H1 (cell line): ENCODE measurements at regions of chr6 and their contacts with region 1.

Region 1: GRCh38 chr6:28335564-28336283 is at the start of gene ZSCAN31:
- DNase-seq: peak; percentile 89 to 95
- H3K4me3 ChIP-seq: peak within 1 kb of the TSS; percentile 86 to 95 (median 91)
- H3K27ac ChIP-seq: peak within 1 kb of the TSS; percentile 95
- H3K4me1 ChIP-seq: no peaks in the 10 kb centered on the region
- H3K27me3 ChIP-seq: no peaks in the 10 kb centered on the region
- CTCF ChIP-seq: no peak
- EP300 ChIP-seq: no peak; a peak in 1 of 3 replicates
- POLR2A ChIP-seq: peak; percentile 86 to 99
- RAD21 ChIP-seq: no peak
- total RNA-seq, gene ZSCAN31: 7.0 and 8.8 TPM in 2 replicates

Region 2: DNA sequence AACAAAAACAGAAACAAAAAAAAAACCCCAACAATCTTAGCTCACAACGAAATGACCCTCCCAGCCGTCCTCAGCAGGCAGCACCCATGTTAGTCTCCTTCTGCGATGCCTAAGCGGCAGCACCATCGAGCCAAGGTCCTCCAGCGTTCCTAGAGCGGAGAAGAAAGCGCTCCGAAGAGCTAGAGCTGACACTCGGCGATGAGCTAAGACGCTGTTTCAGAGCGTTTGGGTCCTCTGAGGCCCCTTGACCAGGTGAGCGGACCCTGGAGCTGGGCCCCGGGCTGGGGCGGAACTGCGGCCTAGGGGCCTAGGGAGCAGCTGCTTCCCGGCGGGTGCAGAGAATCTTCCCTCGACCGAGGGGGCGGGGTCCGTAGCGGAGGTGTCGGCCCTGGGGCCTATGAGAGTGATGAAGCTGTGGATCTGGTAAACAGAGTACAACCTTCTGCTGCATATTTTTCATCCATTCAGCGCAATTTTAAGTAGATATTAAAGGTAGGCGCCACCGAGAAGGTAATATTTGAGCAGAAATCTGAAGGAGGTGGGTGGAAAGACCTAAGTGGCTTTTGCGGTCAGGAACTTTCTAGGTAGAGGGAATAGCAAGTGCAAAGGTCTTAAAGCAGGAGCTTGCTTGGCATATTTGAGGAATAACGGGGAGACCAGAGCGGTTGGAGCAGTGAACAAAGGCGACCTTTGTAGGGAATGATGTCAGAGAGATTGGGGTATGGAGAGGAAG is 68.6 kb before region 1 on chr6 and contains the start of gene ZSCAN26:
- CTCF ChIA-PET with region 1: no interaction called
- POLR2A ChIA-PET with region 1: interaction called, 13 read pairs
- DNase-seq: peak; percentile 78 to 92
- H3K4me3 ChIP-seq: peak within 1 kb of the TSS; percentile 75 to 80 (median 78)
- H3K27ac ChIP-seq: peak within 1 kb of the TSS; percentile 71
- H3K4me1 ChIP-seq: peaks cover 0 to 2% (median 0%) of the 10 kb centered on the region in 4 experiments; a peak in 1 of 7 replicates
- H3K27me3 ChIP-seq: no peaks in the 10 kb centered on the region
- CTCF ChIP-seq: 0 out of 4 replicates have a peak, but pooled peaks of 1 of the 3 experiments have one; percentile 0
- EP300 ChIP-seq: no peak
- POLR2A ChIP-seq: peak; percentile 65 to 93
- RAD21 ChIP-seq: no peak
- total RNA-seq, gene ZSCAN26: 8.2 and 8.5 TPM in 2 replicates

Region 3: GRCh38 chr6:28303570-28303969 is 32.2 kb before region 1 on chr6:
- CTCF ChIA-PET with region 1: no interaction called
- POLR2A ChIA-PET with region 1: interaction called, 12 read pairs
- DNase-seq: no peak
- H3K4me3 ChIP-seq: no peak overlapping the region
- H3K27ac ChIP-seq: no peak overlapping the region
- H3K4me1 ChIP-seq: no peaks in the 10 kb centered on the region
- H3K27me3 ChIP-seq: no peaks in the 10 kb centered on the region
- CTCF ChIP-seq: no peak
- EP300 ChIP-seq: no peak
- POLR2A ChIP-seq: no peak
- RAD21 ChIP-seq: no peak

Region 4: GRCh38 chr6:28322661-28323060 is 13.1 kb before region 1 on chr6:
- CTCF ChIA-PET with region 1: interaction called, 4 read pairs
- POLR2A ChIA-PET with region 1: interaction called, 24 read pairs
- DNase-seq: no peak
- H3K4me3 ChIP-seq: no peak overlapping the region
- H3K27ac ChIP-seq: no peak overlapping the region
- H3K4me1 ChIP-seq: no peaks in the 10 kb centered on the region
- H3K27me3 ChIP-seq: no peaks in the 10 kb centered on the region
- CTCF ChIP-seq: no peak
- EP300 ChIP-seq: no peak
- POLR2A ChIP-seq: no peak
- RAD21 ChIP-seq: no peak

Region 5: GRCh38 chr6:28355743-28356665 is 20.3 kb after region 1 on chr6:
- CTCF ChIA-PET with region 1: interaction called, 10 read pairs
- POLR2A ChIA-PET with region 1: interaction called, 36 read pairs
- DNase-seq: peak; percentile 62 to 76
- H3K4me3 ChIP-seq: peak overlapping the region; percentile 18 to 49 (median 28); a peak in 6 of 8 replicates
- H3K27ac ChIP-seq: peak overlapping the region; percentile 53; the same call in 1 of the 2 replicates
- H3K4me1 ChIP-seq: peaks cover 4 to 6% (median 5%) of the 10 kb centered on the region in 4 experiments; a peak in 5 of 7 replicates
- H3K27me3 ChIP-seq: no peaks in the 10 kb centered on the region
- CTCF ChIP-seq: peak; percentile 18 to 72 (median 66)
- EP300 ChIP-seq: 0 out of 3 replicates have a peak, but pooled peaks of 1 of the 2 experiments have one; percentile 17
- POLR2A ChIP-seq: no peak
- RAD21 ChIP-seq: peak; percentile 81 to 86

Region 6: DNA sequence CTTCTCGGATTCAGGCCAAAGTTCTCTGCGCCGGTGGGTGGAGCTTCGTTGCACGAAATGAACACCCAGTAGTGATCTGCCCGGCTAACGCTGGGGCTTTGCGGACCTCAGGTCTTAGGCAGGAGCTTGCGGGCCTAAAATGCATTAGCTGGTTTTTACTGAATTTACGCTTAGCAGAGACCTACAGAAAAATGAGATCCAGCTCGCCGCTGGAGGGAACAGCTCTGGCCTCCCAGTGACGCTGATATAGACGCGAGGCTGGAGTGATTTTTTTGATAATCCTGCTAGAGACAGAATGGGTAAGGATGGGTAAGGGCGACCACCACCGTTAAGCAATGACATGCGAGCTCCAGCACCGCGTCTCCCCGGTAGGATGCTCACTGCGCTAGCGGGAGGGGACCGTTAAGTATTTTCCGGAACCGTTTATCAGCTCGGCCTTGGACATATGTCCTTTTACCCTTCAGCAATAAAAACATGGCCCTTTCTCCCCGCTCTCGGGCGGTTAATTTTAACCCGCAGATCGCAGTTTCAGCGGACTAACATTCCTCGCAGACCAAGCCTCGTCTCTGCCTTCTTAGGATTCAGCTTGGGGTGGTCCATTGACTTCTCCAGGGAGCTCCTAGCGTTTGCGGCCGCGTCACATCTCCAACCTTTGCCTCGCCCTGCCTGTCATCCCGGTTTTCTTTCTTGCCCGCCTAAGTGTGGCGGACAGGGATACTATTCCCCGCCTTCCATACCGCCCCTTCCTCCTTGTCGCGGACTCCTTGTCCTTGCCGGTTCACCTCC is 299.2 kb after region 1 on chr6:
- CTCF ChIA-PET with region 1: no interaction called
- POLR2A ChIA-PET with region 1: no interaction called
- DNase-seq: peak in 1 of 2 experiments; percentile 71
- H3K4me3 ChIP-seq: peak overlapping the region; percentile 75 to 90 (median 76)
- H3K27ac ChIP-seq: no peak overlapping the region
- H3K4me1 ChIP-seq: peaks cover 0 to 4% (median 0%) of the 10 kb centered on the region in 4 experiments; a peak in 3 of 7 replicates
- H3K27me3 ChIP-seq: peaks cover 2 to 40% (median 21%) of the 10 kb centered on the region in 4 experiments
- CTCF ChIP-seq: no peak
- EP300 ChIP-seq: no peak
- POLR2A ChIP-seq: no peak
- RAD21 ChIP-seq: no peak